ENCODE measurements at regions of chr17 and their contacts with region 1.

Region 1: DNA sequence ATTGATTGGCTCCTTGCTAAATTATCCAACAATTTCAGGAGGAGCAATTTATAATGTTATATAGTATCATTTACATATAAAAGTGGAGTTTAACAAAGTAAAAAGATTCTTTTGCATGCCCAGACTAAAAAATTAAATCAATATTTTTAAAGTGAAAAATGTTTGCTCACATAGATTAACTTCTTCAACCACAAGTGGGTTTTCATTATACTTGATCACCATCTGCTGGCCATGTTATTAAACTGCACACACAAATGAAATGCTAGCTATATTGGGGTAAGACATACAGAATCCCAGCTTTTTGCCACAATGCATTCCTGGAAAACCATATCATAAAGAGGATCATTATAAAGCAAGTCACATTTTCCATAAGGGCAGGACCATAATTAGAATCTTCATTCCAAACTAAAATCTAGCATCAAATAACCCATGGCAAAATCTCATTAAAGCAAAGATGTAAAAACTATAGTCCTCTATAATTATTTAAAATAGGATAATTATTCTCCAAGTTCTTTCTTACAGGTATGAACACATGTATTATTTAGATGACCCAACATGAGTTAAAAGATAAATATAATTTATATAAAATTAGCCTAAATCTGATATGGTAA is 26.3 kb downstream of the CEP112 start:
- DNase-seq: no peak
- H3K4me3 ChIP-seq: no peak overlapping the region
- H3K27ac ChIP-seq: no peak overlapping the region
- H3K4me1 ChIP-seq: peaks cover 0 to 15% (median 12%) of the 10 kb centered on the region in 4 donors
- H3K27me3 ChIP-seq: no peaks in the 10 kb centered on the region
- CTCF ChIP-seq: peak; percentile 36 to 75 (median 68)
- EP300 ChIP-seq: no peak
- POLR2A ChIP-seq: no peak

Region 2: GRCh38 chr17:65231662-65232335 is 933.8 kb before region 1 on chr17:
- intact Hi-C with region 1: loop called (anchors 5 kb)
- DNase-seq: no peak
- H3K4me3 ChIP-seq: no peak overlapping the region
- H3K27ac ChIP-seq: no peak overlapping the region
- H3K4me1 ChIP-seq: peaks cover 0 to 10% (median 7%) of the 10 kb centered on the region in 4 donors
- H3K27me3 ChIP-seq: peaks cover 0 to 25% (median 8%) of the 10 kb centered on the region in 3 donors
- CTCF ChIP-seq: peak in 3 of 4 experiments; percentile 16 to 51 (median 32)
- EP300 ChIP-seq: no peak
- POLR2A ChIP-seq: no peak

Region 3: DNA sequence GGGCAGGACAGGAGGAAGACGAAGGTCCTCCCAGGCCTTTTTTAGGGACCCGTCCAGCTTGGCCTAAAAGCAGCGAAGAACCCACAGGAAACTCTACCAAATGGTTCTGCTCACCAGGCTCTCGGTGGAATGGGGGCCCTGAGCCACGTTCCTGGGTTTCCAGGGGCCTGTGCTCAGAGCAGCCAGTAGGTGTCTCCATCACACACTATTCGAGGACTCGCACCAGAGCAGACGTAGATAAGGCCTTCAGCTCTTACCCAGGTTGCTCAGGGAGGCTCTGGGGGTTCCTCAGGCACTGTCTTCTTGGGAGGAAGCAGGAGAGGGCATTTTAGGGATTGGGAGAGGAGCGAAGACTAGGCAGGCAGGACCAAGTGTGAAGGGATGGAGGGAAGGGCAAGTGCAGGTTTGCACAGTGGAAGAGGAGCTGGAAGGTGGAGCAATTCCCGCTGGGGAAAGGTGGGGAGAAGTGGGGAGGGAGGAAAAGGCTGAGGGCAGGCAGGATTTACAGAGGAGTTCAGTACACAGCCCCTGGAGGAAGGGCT is 871.4 kb before region 1 on chr17:
- intact Hi-C with region 1: loop called (anchors 5 kb)
- DNase-seq: peak; percentile 76
- H3K4me3 ChIP-seq: no peak overlapping the region
- H3K27ac ChIP-seq: no peak overlapping the region
- H3K4me1 ChIP-seq: peaks cover 0 to 9% (median 0%) of the 10 kb centered on the region in 4 donors
- H3K27me3 ChIP-seq: no peaks in the 10 kb centered on the region
- CTCF ChIP-seq: peak in 3 of 4 experiments; percentile 70 to 83 (median 72)
- EP300 ChIP-seq: no peak
- POLR2A ChIP-seq: no peak

Region 4: GRCh38 chr17:65723385-65724151 is 442.1 kb before region 1 on chr17:
- intact Hi-C with region 1: loop called (anchors 5 kb)
- DNase-seq: no peak
- H3K4me3 ChIP-seq: no peak overlapping the region
- H3K27ac ChIP-seq: peak overlapping the region in 2 of 4 donors; percentile 41 to 44
- H3K4me1 ChIP-seq: peaks cover 0 to 27% (median 21%) of the 10 kb centered on the region in 4 donors
- H3K27me3 ChIP-seq: no peaks in the 10 kb centered on the region
- CTCF ChIP-seq: no peak
- EP300 ChIP-seq: no peak
- POLR2A ChIP-seq: no peak

Region 5: GRCh38 chr17:66207936-66208335 is 42.3 kb after region 1 on chr17:
- intact Hi-C with region 1: no loop called
- DNase-seq: no peak
- H3K4me3 ChIP-seq: no peak overlapping the region
- H3K27ac ChIP-seq: no peak overlapping the region
- H3K4me1 ChIP-seq: no peaks in the 10 kb centered on the region
- H3K27me3 ChIP-seq: no peaks in the 10 kb centered on the region
- CTCF ChIP-seq: no peak
- EP300 ChIP-seq: no peak
- POLR2A ChIP-seq: no peak

Region 6: DNA sequence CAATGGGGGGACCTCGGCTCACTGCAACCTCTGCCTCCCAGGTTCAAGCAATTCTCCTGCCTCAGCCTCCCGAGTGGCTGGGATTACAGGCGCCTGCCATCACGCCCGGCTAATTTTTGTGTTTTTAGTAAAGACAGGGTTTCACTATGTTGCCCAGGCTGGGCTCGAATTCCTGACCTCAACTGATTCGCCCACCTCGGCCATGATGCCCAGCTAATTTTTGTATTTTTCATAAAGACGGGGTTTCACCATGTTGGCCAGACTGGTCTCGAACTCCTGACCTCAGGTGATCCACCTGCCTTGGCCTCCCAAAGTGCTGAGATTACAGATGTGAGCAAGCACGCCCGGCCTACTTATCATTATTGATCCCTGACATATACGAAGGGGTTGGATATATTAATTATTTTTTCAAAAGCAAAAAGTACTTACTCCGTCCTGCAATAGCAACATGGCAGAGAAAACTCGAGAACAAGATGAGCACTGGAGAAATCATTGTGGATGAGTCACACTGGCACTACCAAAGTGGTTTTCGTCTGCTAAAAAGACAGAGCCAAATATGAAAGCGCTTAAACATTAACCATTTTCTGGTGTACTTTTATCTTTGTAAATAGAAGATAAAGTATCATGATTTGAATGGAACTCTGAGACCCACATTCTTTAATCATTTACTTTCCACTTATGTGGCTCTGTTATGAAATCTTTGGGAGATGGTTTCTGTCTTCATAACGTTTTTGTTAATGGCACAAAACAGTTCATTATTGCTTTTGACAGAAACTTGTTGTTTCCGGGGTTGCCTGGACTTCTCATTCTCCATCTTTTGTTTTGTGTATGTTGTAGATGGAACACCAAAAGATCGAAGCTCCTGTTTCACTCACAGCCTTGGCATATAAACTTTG is 63.5 kb after region 1 on chr17 and contains the start of gene APOH:
- intact Hi-C with region 1: no loop called
- DNase-seq: no peak
- H3K4me3 ChIP-seq: no peak within 1 kb of the TSS
- H3K27ac ChIP-seq: no peak within 1 kb of the TSS
- H3K4me1 ChIP-seq: no peaks in the 10 kb centered on the region
- H3K27me3 ChIP-seq: no peaks in the 10 kb centered on the region
- CTCF ChIP-seq: no peak
- EP300 ChIP-seq: no peak
- POLR2A ChIP-seq: no peak
- total RNA-seq, gene APOH: 0.71 TPM in 1 of 4 donors, not detected in the others